Activated T-helper 1 cell treated with anti-CD3 and anti-CD28 coated beads, Interleukin-12 subunit alpha, Interleukin-12 subunit beta, Interleukin-2, Interleukin-4 antibody, amounts not matched to agents 30 ng/mL and 10 ng/mL and 1 ng/mL, durations not matched to agents 14 hours and 24 hours and 36 hours (primary cell): ENCODE measurements at regions of chr2 and their contacts with region 1.

Region 1: DNA sequence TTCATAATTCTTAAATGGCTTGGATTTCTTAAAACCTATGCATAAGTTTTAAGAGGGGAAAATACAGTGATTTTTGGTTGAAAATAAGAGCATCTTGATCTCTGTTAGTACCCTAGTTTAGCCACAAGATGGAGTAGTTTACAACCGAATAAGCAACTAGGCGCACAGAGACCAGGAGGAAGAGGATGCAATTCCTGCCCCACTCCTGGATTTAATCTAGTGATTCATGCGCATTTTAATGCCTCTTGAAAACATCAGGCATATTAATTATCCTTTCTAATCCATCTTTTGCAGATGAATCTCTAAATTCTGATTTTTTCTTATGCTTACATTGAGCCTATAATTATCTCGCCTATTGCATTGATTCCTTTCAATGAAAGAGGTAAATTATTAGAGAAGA is 76.7 kb downstream of the MRPS9 start:
- DNase-seq: no peak
- H3K4me3 Mint-ChIP-seq: no peak overlapping the region
- H3K27ac Mint-ChIP-seq: no peak overlapping the region
- H3K4me1 Mint-ChIP-seq: no peaks in the 10 kb centered on the region
- H3K27me3 Mint-ChIP-seq: no peaks in the 10 kb centered on the region

Region 2: GRCh38 chr2:103656558-103656957 is 1458.0 kb before region 1 on chr2:
- intact Hi-C with region 1: no loop called
- DNase-seq: no peak
- H3K4me3 Mint-ChIP-seq: no peak overlapping the region
- H3K27ac Mint-ChIP-seq: no peak overlapping the region
- H3K4me1 Mint-ChIP-seq: no peaks in the 10 kb centered on the region
- H3K27me3 Mint-ChIP-seq: no peaks in the 10 kb centered on the region

Region 3: GRCh38 chr2:104834431-104835153 is 280.0 kb before region 1 on chr2:
- intact Hi-C with region 1: no loop called
- DNase-seq: no peak
- H3K4me3 Mint-ChIP-seq: no peak overlapping the region
- H3K27ac Mint-ChIP-seq: no peak overlapping the region
- H3K4me1 Mint-ChIP-seq: no peaks in the 10 kb centered on the region
- H3K27me3 Mint-ChIP-seq: peaks cover 7% of the 10 kb centered on the region

Region 4: GRCh38 chr2:105179469-105180372 is 65.2 kb after region 1 on chr2:
- intact Hi-C with region 1: loop called (anchors 5 kb)
- DNase-seq: no peak
- H3K4me3 Mint-ChIP-seq: no peak overlapping the region
- H3K27ac Mint-ChIP-seq: no peak overlapping the region
- H3K4me1 Mint-ChIP-seq: no peaks in the 10 kb centered on the region
- H3K27me3 Mint-ChIP-seq: no peaks in the 10 kb centered on the region

Region 5: DNA sequence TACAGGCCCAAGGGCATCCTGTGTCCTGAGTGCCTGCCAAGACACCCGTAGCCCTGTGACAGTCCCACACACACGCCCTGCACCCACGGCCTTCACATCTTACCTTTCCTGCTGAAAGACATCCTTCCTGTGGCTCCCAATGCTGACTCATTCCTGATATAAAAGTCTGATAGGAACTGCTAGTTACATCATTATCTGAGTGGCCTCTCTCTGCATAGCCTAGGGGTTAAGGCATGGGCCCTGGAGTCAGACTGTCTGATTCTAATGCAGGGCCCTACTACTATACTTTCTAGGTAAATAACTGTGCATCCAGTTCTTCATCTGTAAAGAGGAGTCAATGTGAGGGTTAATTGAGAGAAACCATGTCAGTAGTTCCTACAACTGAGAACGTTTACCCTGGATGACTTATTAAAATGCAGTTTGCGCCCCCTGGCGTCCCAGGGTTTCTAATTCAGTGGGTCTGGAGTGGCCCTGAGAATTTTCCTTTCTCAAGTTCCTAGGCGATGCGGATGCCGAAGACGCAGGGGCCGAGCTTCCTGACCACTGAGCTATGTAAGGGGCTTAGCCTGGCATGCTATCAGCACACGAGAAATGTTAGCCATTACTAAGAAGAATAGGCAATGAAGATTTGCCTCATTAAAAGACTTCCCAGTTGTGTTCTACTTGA is 121.0 kb after region 1 on chr2:
- intact Hi-C with region 1: loop called (anchors 1 kb)
- DNase-seq: peak; percentile 29
- H3K4me3 Mint-ChIP-seq: no peak overlapping the region
- H3K27ac Mint-ChIP-seq: no peak overlapping the region
- H3K4me1 Mint-ChIP-seq: peaks cover 9% of the 10 kb centered on the region
- H3K27me3 Mint-ChIP-seq: peaks cover 20% of the 10 kb centered on the region

Region 6: DNA sequence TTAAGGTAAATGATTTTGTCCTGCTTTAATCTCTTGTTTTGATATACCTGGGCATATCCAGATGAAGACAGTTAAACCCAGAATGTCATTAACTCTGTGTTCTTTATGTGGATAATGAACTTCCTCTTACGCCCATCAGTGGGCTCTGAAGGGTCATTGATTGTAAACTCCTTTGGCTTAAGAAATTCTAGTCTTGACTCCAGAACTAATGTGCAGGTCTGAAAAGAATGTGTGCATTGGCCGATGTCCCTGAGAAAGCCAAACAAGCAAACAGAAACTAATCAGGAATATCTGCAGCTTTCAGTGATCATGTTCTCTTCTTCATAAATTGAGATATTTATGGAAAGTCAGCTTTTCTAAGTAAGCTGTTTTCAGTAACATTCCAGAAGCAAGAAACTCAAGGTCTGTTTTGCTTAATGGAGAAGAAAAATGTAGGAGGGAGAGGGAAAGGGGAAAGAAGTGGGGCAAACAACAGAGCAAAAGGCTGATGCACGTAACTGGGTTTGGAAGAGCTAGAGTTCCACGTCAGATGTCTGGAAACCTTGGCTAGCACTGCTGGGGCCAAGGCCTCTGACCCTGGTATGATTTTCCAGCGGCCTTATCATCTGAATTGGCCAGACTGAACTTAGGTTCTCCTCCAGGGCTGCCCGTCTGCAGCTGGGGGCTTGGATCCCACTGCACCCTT is 345.6 kb after region 1 on chr2:
- intact Hi-C with region 1: no loop called
- DNase-seq: no peak
- H3K4me3 Mint-ChIP-seq: no peak overlapping the region
- H3K27ac Mint-ChIP-seq: no peak overlapping the region
- H3K4me1 Mint-ChIP-seq: no peaks in the 10 kb centered on the region
- H3K27me3 Mint-ChIP-seq: peaks cover 9% of the 10 kb centered on the region